ENCODE measurements at regions of chr14 and their contacts with region 1.

Region 1: DNA sequence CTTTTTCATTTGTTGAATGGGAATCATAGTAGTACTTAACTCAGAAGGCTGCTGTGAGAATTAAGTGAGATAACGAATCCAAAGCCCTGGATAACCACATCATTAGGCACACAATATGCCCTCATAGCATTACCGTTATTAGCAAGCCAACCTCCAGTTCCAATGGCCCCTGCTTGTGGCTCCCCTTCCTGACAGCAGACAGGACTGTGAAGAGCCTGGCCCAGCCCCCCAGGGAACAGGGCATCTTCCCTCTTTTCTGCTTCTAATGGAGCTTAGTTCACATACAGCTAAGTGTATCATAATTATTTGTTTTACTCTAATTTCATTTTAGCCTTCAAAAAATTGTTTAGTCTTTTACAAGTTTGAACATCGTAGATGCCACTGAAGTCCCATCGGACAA is 39.7 kb downstream of the DHRS2 start:
- DNase-seq: no peak
- H3K4me3 ChIP-seq: no peak overlapping the region
- CTCF ChIP-seq: no peak

Region 2: DNA sequence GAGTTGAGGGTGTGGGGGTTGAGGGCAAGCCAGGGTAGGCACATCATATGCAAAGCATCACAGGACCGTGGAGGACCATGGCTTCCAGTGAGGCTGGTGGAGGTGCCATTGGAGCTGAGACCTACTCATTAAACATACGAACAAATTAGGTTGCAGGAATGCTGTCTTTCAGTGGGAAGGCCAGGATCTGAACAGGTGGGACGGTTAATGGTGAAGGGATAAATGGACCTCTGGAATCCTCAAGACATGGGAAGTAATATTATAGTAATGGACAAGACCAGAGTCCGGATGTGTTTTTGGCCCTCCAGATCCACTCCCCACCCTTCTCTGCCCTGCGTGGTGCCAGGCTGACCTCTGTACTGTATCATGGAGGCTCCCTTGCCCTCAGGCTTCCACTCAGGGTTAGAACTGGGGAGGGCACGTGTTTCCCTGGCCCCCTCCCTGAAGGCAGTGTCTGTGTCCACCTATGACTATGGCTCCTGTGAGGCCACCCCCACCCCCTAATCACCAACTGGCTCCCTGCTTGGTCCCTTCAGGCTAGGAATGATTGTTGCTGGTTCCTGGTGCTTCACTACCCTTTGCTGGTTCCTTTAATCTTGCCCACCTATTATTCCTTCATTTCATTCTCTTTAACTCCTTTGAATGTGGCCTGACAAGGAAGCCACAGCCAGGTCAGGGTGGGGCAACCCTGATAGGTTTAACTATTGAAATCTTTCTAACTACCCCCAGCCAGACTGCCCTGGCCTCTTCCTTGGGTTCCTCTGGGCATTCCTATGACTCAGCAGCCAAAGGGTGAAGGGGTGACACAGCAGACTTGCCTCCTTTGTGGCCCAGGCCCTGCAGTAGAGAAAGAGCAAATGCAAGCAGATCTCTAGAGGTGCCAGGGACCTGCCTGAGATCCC is 29.0 kb before region 1 on chr14:
- CTCF ChIA-PET with region 1: no interaction called
- POLR2A ChIA-PET with region 1: no interaction called
- DNase-seq: no peak
- H3K4me3 ChIP-seq: no peak overlapping the region
- CTCF ChIP-seq: no peak

Region 3: GRCh38 chr14:23665375-23666192 is 10.3 kb before region 1 on chr14:
- CTCF ChIA-PET with region 1: interaction called, 12 read pairs
- POLR2A ChIA-PET with region 1: no interaction called
- DNase-seq: peak; percentile 7
- H3K4me3 ChIP-seq: no peak overlapping the region
- CTCF ChIP-seq: peak; percentile 71